ENCODE measurements at regions of chr14 and their contacts with region 1.

Region 1: DNA sequence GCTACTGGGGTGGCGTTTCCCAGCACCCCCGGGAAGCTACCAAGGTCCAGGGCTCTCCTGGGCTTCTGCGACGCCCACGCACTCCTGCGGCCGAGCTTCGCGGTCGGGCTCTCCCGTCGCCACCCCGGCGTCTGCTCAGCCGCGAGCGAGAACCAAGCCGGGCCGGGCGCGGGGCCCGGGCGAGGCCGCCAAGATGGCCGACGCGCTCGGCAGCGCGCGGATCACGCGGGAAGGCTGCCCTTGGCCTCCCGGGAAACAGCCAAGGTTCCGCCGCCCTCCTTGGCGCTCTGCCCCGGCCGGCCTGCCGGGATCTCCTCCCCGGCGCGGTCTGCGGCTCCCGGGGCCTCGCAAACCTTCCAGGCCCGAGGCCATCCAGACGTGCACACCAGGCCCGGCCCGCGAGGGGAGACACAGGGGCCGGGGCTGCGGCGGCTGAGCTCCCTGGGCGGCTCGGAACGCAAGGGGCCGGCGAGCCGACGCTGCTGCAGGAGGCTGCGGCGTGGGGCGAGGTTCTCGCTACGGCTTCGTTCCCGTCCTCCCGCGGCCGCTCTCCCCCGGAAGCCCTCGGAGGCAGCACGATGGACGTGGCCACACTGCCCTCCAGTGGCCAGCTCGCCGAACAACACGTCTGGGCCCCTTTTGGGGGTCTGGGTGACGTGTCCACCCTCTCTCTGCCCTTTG is 23.5 kb upstream of the ZFP36L1 start:
- DNase-seq: peak; percentile 89 to 92
- ATAC-seq: peak; percentile 90 to 96 (median 92)
- H3K4me3 ChIP-seq: peak overlapping the region; percentile 22 to 68 (median 57)
- H3K27ac ChIP-seq: peak overlapping the region; percentile 98 to 100 (median 99)
- H3K4me1 ChIP-seq: peaks cover 6 to 64% (median 42%) of the 10 kb centered on the region in 9 donors
- H3K27me3 ChIP-seq: no peaks in the 10 kb centered on the region
- CTCF ChIP-seq: peak; percentile 95 to 99 (median 98)

Region 2: GRCh38 chr14:67837011-67837624 is 979.3 kb before region 1 on chr14:
- intact Hi-C with region 1: loop called in 6 of 10 experiments (anchors 5 to 10 kb)
- DNase-seq: peak in 1 of 2 donors; percentile 75
- ATAC-seq: peak in 1 of 8 donors; percentile 42
- H3K4me3 ChIP-seq: no peak overlapping the region
- H3K27ac ChIP-seq: no peak overlapping the region
- H3K4me1 ChIP-seq: no peaks in the 10 kb centered on the region
- H3K27me3 ChIP-seq: no peaks in the 10 kb centered on the region
- CTCF ChIP-seq: peak; percentile 4 to 67 (median 56)

Region 3: DNA sequence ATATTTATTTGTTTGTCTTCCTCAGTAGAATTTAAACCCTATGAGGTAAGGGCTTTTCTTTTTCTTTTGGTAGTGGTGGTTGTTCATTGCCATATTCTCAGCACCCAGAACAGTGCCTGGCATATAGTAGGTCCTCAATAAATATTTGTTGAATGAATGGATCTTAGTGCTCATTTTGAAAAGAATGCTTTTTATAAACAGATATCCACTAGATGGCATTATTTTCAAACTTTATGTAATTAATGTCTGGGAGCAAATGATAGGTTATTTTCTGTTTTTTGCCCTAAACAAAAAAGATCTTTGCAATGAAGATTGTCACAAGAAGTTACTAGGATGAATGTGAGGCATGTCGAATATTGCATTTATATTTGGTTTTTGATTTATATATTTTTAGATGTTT is 932.7 kb before region 1 on chr14:
- intact Hi-C with region 1: loop called in 3 of 10 experiments (anchors 5 kb)
- DNase-seq: no peak
- ATAC-seq: no peak
- H3K4me3 ChIP-seq: no peak overlapping the region
- H3K27ac ChIP-seq: peak overlapping the region in 2 of 10 donors; percentile 4 to 24
- H3K4me1 ChIP-seq: peaks cover 0 to 19% (median 7%) of the 10 kb centered on the region in 9 donors
- H3K27me3 ChIP-seq: no peaks in the 10 kb centered on the region
- CTCF ChIP-seq: peak in 7 of 9 donors; percentile 19 to 57 (median 45)

Region 4: GRCh38 chr14:67934008-67934481 is 882.4 kb before region 1 on chr14:
- intact Hi-C with region 1: loop called in 2 of 10 experiments (anchors 2 to 10 kb)
- DNase-seq: peak in 1 of 2 donors; percentile 26
- ATAC-seq: peak in 7 of 8 donors; percentile 87 to 94 (median 92)
- H3K4me3 ChIP-seq: no peak overlapping the region
- H3K27ac ChIP-seq: peak overlapping the region in 8 of 10 donors; percentile 9 to 62 (median 38)
- H3K4me1 ChIP-seq: peaks cover 3 to 24% (median 11%) of the 10 kb centered on the region in 9 donors
- H3K27me3 ChIP-seq: no peaks in the 10 kb centered on the region
- CTCF ChIP-seq: peak; percentile 40 to 79 (median 66)

Region 5: DNA sequence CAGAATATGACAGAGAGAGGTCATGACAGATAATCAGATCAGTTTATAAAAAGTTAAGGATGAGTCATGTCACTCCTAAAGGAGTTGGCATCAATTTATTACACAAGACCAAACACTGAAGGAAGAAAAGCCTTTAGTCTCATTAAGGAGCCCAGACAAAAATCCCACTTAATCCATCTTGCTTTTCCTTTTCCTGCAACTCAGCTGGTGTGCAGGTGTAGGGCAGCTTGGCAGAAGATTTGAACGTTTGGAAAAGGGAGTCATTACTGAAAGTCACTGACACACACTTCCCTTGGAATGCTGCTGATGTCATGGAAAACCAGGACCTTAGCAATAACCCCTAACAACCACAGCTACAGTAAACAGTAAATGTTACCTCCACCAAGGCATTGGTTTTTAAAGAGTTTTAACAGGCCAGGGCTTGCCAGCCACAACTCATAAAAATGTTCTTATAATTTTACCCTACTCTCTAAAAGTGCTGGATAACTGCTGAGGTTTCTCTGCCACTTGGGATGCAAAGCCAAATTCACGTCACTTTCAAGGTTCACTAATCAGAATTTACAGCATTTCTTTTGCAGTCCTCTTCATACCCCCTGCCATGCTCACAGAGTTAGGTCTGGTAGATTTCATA is 676.2 kb before region 1 on chr14:
- intact Hi-C with region 1: loop called in 3 of 10 experiments (anchors 10 kb)
- DNase-seq: peak in 1 of 2 donors; percentile 72
- ATAC-seq: peak; percentile 25 to 77 (median 60)
- H3K4me3 ChIP-seq: no peak overlapping the region
- H3K27ac ChIP-seq: peak overlapping the region; percentile 6 to 78 (median 52)
- H3K4me1 ChIP-seq: peaks cover 15 to 74% (median 45%) of the 10 kb centered on the region in 9 donors
- H3K27me3 ChIP-seq: no peaks in the 10 kb centered on the region
- CTCF ChIP-seq: no peak

Region 6: DNA sequence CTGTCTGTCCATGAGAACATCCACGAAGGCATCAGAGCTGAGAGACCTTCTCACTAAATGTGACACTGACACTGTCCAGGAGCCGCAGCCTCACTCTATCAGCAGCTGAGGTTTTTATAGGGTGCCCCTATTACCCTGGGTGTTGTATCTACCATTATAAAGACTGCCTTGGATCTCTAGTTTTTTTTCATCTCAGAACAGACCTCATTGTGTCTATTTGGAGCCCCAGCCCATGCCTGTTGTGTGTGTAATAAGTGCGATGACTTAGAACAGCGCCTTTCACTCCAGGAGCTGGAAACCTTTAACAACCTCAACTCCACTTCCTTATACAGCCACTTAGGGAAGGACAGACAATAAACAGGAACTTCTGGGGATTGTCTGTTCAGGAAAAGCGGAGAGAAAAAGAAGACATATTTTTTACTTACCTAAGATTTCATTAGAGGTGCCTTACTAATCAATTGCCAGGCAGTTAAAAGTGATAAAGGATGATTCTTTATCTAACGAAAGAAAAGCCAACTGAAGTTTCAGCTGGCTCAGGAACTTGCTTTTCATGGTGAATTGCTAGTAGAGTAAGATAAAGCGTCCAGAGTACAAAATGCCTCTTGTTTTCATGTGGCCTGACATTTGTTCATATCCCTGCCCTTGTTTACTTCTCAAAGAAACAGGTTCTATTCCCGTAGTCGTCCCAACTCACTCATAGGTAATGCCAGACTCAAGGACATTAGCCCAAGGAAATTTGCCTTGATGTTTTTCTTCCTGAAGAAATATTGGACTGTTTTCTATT is 576.2 kb before region 1 on chr14:
- intact Hi-C with region 1: loop called in 2 of 10 experiments (anchors 5 kb)
- DNase-seq: no peak
- ATAC-seq: peak in 7 of 8 donors; percentile 16 to 68 (median 46)
- H3K4me3 ChIP-seq: no peak overlapping the region
- H3K27ac ChIP-seq: peak overlapping the region in 8 of 10 donors; percentile 13 to 72 (median 49)
- H3K4me1 ChIP-seq: peaks cover 8 to 49% (median 34%) of the 10 kb centered on the region in 9 donors
- H3K27me3 ChIP-seq: no peaks in the 10 kb centered on the region
- CTCF ChIP-seq: no peak

Region 7: DNA sequence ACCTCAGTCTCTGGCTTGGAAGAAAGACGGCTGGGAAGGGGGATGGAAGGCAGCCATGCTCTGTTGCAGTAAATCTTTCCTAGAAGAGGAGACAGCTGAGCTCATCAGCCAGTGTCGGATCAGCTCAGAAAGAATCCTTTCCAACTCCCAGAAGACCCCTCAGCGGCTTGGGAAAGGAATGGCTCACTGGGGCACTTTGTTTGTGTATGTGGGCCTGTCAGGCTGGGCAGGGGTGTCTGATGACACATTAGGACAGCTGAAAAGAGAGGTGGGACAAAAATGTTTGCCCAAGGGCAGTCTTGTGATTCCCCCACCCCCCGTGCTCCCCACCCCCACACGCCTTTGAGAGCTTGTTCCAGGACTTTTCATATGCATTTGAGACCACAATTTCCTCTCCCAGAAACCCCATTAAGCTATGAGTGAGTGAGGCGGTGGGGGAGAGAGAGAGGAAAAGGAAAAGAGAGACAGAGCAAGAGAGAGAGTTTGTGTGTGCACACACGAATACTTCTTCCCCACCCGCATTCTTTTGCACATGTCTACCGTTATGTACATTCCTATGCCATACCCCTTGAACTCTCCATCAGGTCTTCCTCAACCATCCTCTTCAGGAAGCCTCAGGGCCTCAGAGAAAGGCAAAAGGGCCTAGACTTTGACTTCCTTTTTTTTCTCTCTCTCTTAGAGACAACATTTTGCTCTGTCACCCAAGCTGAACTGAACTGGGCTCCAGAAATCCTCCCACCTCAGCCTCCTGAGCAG is 222.4 kb before region 1 on chr14:
- intact Hi-C with region 1: no loop called
- DNase-seq: no peak
- ATAC-seq: no peak
- H3K4me3 ChIP-seq: no peak overlapping the region
- H3K27ac ChIP-seq: peak overlapping the region in 3 of 10 donors; percentile 28 to 76 (median 34)
- H3K4me1 ChIP-seq: peaks cover 11 to 57% (median 31%) of the 10 kb centered on the region in 9 donors
- H3K27me3 ChIP-seq: no peaks in the 10 kb centered on the region
- CTCF ChIP-seq: no peak

Measured in heart right ventricle (tissue), 16 donors.